Activated B cell treated with CpG ODN at 0.5 μM for 24 hours (primary cell): ENCODE measurements at regions of chr1 and their contacts with region 1.

Region 1: DNA sequence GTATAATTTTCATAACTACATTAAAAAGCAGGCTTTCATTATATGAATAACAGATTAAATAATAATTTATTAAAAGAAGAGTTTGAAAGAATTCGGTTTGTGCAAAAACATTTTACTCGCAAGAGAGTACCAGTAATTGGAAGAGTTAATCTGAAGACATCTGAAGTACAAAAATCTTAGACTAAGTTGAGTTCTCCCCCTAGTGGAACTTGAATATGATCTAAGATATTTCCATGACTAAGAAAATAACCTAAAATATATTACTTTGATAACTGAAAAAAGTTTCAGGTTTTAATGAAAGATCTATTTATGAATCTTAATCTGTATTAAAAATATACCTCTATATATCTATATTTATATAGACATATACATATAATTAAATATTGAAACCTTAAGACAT is 112.5 kb upstream of the GFI1 start:
- DNase-seq: no peak
- ATAC-seq: no peak
- H3K4me3 Mint-ChIP-seq: no peak overlapping the region
- H3K27ac Mint-ChIP-seq: no peak overlapping the region
- H3K4me1 Mint-ChIP-seq: no peaks in the 10 kb centered on the region
- H3K27me3 Mint-ChIP-seq: no peaks in the 10 kb centered on the region
- CTCF ChIP-seq: no peak

Region 2: DNA sequence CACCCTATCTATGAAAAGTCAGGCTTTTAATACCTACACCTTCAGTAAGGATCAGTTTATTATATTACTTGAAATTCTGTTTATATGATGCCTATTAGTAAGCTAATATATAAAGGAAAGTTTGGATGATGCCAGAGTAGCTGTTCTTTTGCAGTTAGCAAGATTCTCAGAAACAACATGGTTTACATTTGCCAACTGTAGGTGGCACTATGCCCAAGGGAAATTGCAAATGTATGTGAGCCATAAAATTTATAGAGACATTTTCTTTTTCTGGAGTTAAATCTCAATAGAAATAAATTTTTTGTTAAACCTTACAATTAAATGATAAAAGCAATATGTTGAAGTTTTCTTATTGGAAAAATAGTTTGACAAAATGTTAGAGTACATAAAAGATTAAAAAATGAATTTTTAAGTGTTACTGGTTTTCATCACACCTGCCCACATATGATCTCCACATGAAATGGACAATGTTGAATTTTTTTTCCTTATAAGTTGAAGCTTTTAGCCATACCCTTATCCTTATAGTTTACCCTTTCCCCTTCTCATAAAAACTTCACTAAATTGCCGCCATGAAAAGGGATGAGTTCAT is 601.5 kb before region 1 on chr1:
- CTCF ChIA-PET with region 1: no interaction called
- POLR2A ChIA-PET with region 1: no interaction called
- intact Hi-C with region 1: loop called (anchors 5 kb)
- DNase-seq: no peak
- ATAC-seq: no peak
- H3K4me3 Mint-ChIP-seq: no peak overlapping the region
- H3K27ac Mint-ChIP-seq: no peak overlapping the region
- H3K4me1 Mint-ChIP-seq: no peaks in the 10 kb centered on the region
- H3K27me3 Mint-ChIP-seq: no peaks in the 10 kb centered on the region
- CTCF ChIP-seq: no peak

Region 3: GRCh38 chr1:92310185-92310597 is 289.0 kb before region 1 on chr1:
- CTCF ChIA-PET with region 1: interaction called, 19 read pairs
- POLR2A ChIA-PET with region 1: no interaction called
- intact Hi-C with region 1: loop called (anchors 1 kb)
- DNase-seq: no peak
- ATAC-seq: peak; percentile 37
- H3K4me3 Mint-ChIP-seq: no peak overlapping the region
- H3K27ac Mint-ChIP-seq: no peak overlapping the region
- H3K4me1 Mint-ChIP-seq: no peaks in the 10 kb centered on the region
- H3K27me3 Mint-ChIP-seq: no peaks in the 10 kb centered on the region
- CTCF ChIP-seq: no peak

Region 4: DNA sequence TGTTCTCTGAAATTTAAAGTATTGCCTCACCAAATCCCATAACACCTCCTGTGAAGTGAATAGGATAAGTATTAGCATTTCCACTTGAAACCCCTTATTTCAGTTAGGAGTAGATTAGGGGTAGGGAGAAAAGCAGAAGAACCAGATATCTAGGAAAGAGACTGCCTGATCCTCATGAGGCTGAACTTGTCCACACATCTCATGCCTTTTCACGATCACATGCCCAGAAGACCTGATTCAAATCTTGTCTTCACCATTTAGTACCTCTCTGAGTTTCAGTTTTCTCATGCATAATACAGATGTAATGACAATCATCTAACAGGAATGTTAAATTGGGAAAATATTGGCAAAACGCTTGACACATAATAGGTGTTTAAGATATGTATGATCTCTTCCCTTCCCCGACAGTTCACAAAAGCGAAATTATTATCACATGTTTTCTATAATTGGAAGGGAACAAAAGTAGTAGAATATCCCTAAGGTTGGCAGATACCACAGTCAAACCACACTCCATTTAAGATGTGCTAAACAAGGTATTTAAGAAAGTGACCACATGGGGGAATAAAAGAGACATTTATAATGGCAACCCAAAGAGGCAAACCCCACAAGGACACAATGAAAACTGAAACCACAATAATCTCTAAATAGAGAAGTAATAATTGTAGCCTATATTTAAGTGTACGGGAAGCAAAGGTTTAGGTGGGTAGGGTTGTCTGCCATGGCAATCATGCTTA is 137.7 kb before region 1 on chr1:
- CTCF ChIA-PET with region 1: interaction called, 3 read pairs
- POLR2A ChIA-PET with region 1: no interaction called
- intact Hi-C with region 1: loop called (anchors 1 kb)
- DNase-seq: no peak
- ATAC-seq: peak; percentile 50
- H3K4me3 Mint-ChIP-seq: no peak overlapping the region
- H3K27ac Mint-ChIP-seq: no peak overlapping the region
- H3K4me1 Mint-ChIP-seq: peaks cover 19% of the 10 kb centered on the region
- H3K27me3 Mint-ChIP-seq: peaks cover 4% of the 10 kb centered on the region
- CTCF ChIP-seq: no peak

Region 5: GRCh38 chr1:92485381-92486257 is 113.6 kb before region 1 on chr1:
- CTCF ChIA-PET with region 1: interaction called, 3 read pairs
- POLR2A ChIA-PET with region 1: no interaction called
- intact Hi-C with region 1: loop called (anchors 2 kb)
- DNase-seq: peak; percentile 67
- ATAC-seq: peak; percentile 70
- H3K4me3 Mint-ChIP-seq: peak overlapping the region; percentile 90
- H3K27ac Mint-ChIP-seq: no peak overlapping the region
- H3K4me1 Mint-ChIP-seq: peaks cover 27% of the 10 kb centered on the region
- H3K27me3 Mint-ChIP-seq: peaks cover 14% of the 10 kb centered on the region
- CTCF ChIP-seq: no peak

Region 6: DNA sequence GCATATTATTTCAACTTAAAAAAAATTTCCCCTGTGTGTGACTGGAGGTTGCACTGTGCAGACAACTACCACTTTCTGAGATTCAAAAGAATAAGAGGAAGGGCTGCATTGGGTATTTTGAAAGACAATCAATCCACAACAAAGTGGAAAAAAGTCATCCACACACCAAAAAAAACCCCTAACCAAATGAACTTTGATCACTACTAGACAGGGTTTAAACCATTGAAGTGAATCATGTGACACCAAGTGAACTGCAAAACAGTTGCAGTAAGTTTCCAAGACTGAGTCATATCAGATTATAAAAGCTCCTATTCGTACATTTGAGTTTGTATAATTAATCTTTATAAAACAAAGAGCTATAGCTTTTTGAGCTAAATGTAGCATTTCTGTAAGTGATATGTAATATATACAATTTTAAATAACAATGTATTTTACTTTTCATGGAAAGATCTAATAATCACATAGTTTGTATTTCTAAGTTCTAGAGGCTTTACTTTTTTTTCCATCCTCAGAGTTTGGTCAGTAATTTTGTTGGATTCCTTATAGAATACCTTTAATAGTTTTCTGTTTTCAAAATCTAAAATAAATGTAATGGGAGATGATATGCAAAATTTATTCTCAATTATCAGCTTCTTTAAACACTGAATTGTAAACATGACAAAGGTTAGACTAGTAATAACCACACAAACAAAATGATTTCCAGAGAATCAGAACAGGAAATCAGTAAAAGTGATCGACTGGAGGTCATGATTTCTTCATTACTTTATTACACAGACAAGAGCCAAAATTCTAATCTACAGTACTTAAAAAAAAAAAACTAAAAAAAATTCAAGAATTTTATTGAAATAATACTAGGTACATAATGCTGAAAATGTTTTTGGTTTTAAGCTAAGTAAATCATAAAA is 62.0 kb before region 1 on chr1:
- CTCF ChIA-PET with region 1: no interaction called
- POLR2A ChIA-PET with region 1: no interaction called
- intact Hi-C with region 1: loop called (anchors 1 kb)
- DNase-seq: no peak
- ATAC-seq: peak; percentile 75
- H3K4me3 Mint-ChIP-seq: peak overlapping the region; percentile 59
- H3K27ac Mint-ChIP-seq: peak overlapping the region; percentile 65
- H3K4me1 Mint-ChIP-seq: peaks cover 45% of the 10 kb centered on the region
- H3K27me3 Mint-ChIP-seq: no peaks in the 10 kb centered on the region
- CTCF ChIP-seq: no peak

Region 7: GRCh38 chr1:92583821-92584760 is 15.1 kb before region 1 on chr1:
- CTCF ChIA-PET with region 1: no interaction called
- POLR2A ChIA-PET with region 1: no interaction called
- intact Hi-C with region 1: no loop called
- DNase-seq: no peak
- ATAC-seq: peak; percentile 40
- H3K4me3 Mint-ChIP-seq: no peak overlapping the region
- H3K27ac Mint-ChIP-seq: no peak overlapping the region
- H3K4me1 Mint-ChIP-seq: no peaks in the 10 kb centered on the region
- H3K27me3 Mint-ChIP-seq: no peaks in the 10 kb centered on the region
- CTCF ChIP-seq: no peak

Region 8: DNA sequence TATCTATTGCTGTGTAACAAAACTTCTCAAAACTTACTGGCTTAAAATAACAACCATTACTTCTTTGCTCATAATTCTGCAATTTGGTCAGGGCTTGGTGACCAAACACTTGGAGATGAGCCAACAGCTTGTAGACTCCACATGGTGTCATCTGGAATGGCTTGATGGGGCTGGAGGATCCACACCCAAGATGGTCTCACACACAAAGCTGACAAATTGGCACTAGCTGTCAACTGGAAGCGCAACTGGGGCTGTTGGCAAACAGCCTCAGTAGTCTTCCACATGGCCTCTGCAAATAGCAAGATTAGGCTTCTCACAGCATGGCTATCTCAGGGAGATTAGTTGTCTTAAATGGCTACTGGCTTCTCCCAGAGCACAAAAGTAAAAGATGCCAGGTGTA is 452.8 kb after region 1 on chr1:
- CTCF ChIA-PET with region 1: no interaction called
- POLR2A ChIA-PET with region 1: no interaction called
- intact Hi-C with region 1: no loop called
- DNase-seq: no peak
- ATAC-seq: no peak
- H3K4me3 Mint-ChIP-seq: no peak overlapping the region
- H3K27ac Mint-ChIP-seq: no peak overlapping the region
- H3K4me1 Mint-ChIP-seq: no peaks in the 10 kb centered on the region
- H3K27me3 Mint-ChIP-seq: peaks cover 2% of the 10 kb centered on the region
- CTCF ChIP-seq: no peak